Naive thymus-derived CD8-positive, alpha-beta T cell (primary cell): ENCODE measurements at regions of chr5 and their contacts with region 1.

Region 1: GRCh38 chr5:142800776-142801494 is 30.8 kb downstream of the ARHGAP26 start:
- DNase-seq: peak in 9 of 10 donors; percentile 19 to 74 (median 53)
- ATAC-seq: peak; percentile 81 to 82
- H3K4me3 Mint-ChIP-seq: peak overlapping the region; percentile 68 to 90 (median 82)
- H3K27ac Mint-ChIP-seq: peak overlapping the region; percentile 91 to 98 (median 95)
- H3K4me1 Mint-ChIP-seq: peaks cover 42 to 86% (median 69%) of the 10 kb centered on the region in 4 donors
- H3K27me3 Mint-ChIP-seq: no peaks in the 10 kb centered on the region

Region 2: DNA sequence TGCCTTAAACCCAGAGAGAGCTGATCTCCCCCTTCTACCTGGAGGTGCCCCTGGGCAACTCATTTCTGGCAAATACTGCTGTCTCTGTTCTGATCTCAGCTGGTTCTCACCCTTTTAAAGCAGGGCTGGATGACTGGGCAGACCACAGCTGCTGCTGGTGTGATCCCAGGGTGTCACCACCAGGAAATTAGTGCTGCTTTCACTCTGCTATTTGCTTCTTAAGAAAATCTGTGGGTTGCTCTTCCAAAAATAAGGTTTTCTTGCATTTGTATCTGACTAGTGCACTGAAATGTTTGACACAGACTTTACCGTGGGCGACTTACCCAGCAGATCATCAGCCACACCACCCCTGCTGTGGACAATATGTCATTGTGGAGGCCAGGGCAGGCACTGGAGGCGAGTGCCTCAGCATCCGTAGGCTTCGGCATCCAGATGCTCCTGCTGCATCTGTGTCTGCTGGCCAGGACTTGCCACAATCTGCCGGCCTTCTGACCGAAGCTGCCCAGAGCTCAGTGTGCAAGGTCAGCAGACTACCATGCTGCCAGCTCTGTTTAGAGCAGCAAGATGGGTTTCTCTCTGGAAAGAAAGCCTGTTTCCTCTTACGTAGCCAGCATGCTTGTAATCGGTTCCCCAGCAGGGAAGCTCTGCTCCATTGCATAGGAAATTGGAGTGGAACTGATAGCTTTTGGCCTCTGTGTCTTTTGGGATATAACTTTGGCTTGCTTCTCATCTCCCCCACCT is 17.2 kb before region 1 on chr5:
- POLR2A ChIA-PET with region 1: interaction called, 10 read pairs
- DNase-seq: no peak
- ATAC-seq: peak; percentile 35 to 44
- H3K4me3 Mint-ChIP-seq: peak overlapping the region in 7 of 10 donors; percentile 28 to 81 (median 48)
- H3K27ac Mint-ChIP-seq: peak overlapping the region; percentile 20 to 88 (median 65)
- H3K4me1 Mint-ChIP-seq: peaks cover 32 to 84% (median 74%) of the 10 kb centered on the region in 4 donors
- H3K27me3 Mint-ChIP-seq: no peaks in the 10 kb centered on the region